ENCODE measurements at regions of chr17 and their contacts with region 1.

Region 1: DNA sequence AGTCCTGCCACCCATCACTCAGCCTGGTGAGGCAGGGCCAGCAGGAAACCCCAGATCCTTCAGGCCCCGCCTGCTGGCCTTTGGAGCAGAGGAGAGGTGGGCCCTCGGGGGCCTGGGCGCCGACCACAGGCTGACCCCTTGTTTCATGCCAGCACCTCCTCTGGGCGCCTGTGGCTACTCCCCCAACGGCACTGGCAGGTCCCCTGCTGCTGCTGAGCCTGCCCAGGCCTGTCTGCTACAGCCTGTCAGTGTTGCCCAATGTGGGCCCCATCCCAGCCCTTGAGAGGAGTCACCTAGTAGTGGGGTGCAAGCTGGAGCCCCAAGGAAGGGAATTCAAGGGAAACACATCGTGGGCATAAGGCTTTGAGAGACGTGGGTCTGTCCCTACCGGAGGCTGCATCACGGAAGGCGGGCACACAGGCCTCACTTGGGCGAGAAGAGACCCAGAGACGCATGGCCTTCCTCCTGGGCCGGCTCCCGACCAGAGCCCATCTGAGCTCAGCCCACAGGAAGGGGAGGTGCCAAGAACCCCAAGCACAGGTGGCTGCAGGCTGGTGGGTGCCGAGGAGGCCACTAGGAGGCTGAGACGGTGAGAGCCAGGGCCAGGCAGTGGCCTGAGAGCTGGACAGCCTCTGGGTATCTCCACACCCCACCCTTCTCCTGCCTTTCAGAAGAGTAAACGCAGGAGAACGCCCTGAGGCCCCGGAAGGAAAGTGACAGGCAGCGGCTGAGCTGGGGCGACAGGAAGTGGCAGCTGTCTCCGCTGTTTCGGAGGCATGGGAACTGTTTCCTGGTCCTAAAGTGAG is 8.0 kb upstream of the FASN start:
- DNase-seq: peak; percentile 72
- H3K4me3 Mint-ChIP-seq: peak overlapping the region; percentile 84
- H3K27ac Mint-ChIP-seq: peak overlapping the region; percentile 94
- H3K4me1 Mint-ChIP-seq: peaks cover 45% of the 10 kb centered on the region
- H3K27me3 Mint-ChIP-seq: no peaks in the 10 kb centered on the region

Region 2: GRCh38 chr17:82003411-82004381 is 102.4 kb before region 1 on chr17:
- CTCF ChIA-PET with region 1: no interaction called
- POLR2A ChIA-PET with region 1: no interaction called
- DNase-seq: no peak
- H3K4me3 Mint-ChIP-seq: no peak overlapping the region
- H3K27ac Mint-ChIP-seq: no peak overlapping the region
- H3K4me1 Mint-ChIP-seq: no peaks in the 10 kb centered on the region
- H3K27me3 Mint-ChIP-seq: no peaks in the 10 kb centered on the region

Region 3: GRCh38 chr17:82030470-82031302 is 75.4 kb before region 1 on chr17:
- CTCF ChIA-PET with region 1: interaction called, 5 read pairs
- POLR2A ChIA-PET with region 1: interaction called, 13 read pairs
- DNase-seq: peak; percentile 86
- H3K4me3 Mint-ChIP-seq: peak overlapping the region; percentile 78
- H3K27ac Mint-ChIP-seq: peak overlapping the region; percentile 56
- H3K4me1 Mint-ChIP-seq: peaks cover 31% of the 10 kb centered on the region
- H3K27me3 Mint-ChIP-seq: no peaks in the 10 kb centered on the region

Region 4: DNA sequence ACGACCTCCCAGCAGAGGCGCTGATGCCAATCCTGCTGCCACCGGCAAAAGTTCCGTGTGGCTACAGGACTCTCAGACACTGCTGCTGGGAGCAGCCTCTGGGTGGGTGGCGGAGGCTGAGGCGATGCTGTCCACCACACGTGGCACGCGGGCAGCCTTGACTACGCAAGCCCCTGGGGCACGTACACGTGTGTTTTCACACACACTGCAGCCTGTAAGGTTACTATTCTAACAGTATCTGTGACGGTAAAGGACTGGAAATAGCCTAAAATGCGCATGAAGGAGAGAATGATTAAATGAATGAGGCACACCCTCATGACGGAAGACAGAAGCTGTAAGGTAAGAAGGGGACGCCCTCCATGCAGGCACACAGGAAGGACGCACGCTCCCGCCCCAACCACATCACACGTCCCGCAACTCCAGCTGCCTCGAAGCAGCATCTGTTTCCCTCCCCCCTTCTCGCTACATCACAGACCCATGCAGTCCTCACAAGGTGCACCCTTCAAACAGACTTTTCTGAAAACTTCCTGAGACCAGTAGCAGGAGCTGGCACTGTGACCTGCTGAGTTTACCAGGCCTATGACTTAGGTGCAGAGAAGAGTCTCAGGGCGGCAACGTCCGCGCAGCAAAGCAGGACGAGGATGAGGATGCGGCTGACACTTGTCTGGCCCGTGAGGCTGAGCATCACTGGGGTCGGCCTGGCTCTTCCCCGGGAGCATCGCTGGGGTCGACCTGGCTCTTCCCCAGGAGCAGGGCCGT is 20.6 kb after region 1 on chr17:
- CTCF ChIA-PET with region 1: interaction called, 13 read pairs
- POLR2A ChIA-PET with region 1: interaction called, 21 read pairs
- DNase-seq: peak; percentile 80
- H3K4me3 Mint-ChIP-seq: peak overlapping the region; percentile 61
- H3K27ac Mint-ChIP-seq: peak overlapping the region; percentile 95
- H3K4me1 Mint-ChIP-seq: peaks cover 33% of the 10 kb centered on the region
- H3K27me3 Mint-ChIP-seq: no peaks in the 10 kb centered on the region